CD8-positive, alpha-beta T cell (primary cell): ENCODE measurements at regions of chr7 and their contacts with region 1.

Region 1: GRCh38 chr7:80517282-80517747 is 5.5 kb upstream of the GNAT3 start:
- DNase-seq: no peak
- ATAC-seq: no peak
- H3K4me3 ChIP-seq: no peak overlapping the region
- H3K4me3 Mint-ChIP-seq: no peak overlapping the region
- H3K27ac ChIP-seq: no peak overlapping the region
- H3K27ac Mint-ChIP-seq: no peak overlapping the region
- H3K4me1 ChIP-seq: no peaks in the 10 kb centered on the region
- H3K4me1 Mint-ChIP-seq: no peaks in the 10 kb centered on the region
- H3K27me3 ChIP-seq: no peaks in the 10 kb centered on the region
- H3K27me3 Mint-ChIP-seq: no peaks in the 10 kb centered on the region
- CTCF ChIP-seq: no peak

Region 2: DNA sequence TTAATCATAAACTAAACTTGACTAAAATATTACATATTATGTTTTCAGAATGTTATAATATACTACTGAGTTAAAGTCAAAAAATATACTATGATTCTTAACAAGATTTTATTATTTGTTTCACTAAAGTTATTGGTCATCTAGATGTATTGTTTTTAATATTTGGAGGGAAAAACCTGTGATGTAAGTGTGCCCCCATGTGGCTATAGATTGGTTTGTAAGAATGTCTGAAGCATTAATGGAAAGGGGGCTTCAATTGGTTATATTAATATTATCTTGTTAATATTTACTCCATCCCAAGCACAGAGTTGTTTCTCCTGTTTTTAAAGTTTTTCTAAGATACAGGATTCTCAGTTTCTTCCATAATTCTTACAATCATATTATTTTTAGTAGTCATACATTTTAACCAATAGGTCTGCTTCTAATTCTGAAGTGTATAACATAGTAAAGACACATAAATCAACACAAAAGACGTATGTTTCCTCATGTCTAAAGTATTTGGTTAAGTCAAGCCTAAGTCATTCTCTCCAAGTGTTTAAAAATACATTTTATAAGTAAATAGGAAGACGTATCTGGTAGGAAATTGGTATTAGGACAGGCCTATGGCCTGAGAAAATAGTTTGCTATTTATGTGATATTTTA is 63.5 kb before region 1 on chr7:
- CTCF ChIA-PET with region 1: no interaction called
- POLR2A ChIA-PET with region 1: no interaction called
- intact Hi-C with region 1: loop called in 1 of 2 experiments (anchors 10 kb)
- DNase-seq: peak in 1 of 9 experiments; percentile 21
- ATAC-seq: no peak
- H3K4me3 ChIP-seq: no peak overlapping the region
- H3K4me3 Mint-ChIP-seq: no peak overlapping the region
- H3K27ac ChIP-seq: no peak overlapping the region
- H3K27ac Mint-ChIP-seq: no peak overlapping the region
- H3K4me1 ChIP-seq: no peaks in the 10 kb centered on the region
- H3K4me1 Mint-ChIP-seq: no peaks in the 10 kb centered on the region
- H3K27me3 ChIP-seq: no peaks in the 10 kb centered on the region
- H3K27me3 Mint-ChIP-seq: no peaks in the 10 kb centered on the region
- CTCF ChIP-seq: no peak

Region 3: DNA sequence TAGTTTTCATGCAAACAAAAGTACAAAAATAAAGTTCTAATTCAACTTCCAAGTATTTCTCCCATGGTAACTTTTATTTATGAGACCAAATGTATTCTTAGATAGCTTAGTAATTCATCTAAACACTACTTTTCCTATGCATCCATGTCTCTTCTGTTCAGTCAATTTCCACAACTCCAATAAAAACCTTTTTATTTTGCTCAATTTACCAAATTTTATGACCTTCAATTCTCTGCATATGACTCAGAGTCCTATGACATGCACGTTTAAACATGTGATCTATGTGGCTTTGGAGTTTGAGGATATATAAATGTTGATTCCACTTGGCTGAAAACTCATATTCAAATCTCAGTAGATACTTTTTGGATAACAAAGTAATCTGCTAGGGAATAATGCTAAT is 35.0 kb after region 1 on chr7:
- CTCF ChIA-PET with region 1: no interaction called
- POLR2A ChIA-PET with region 1: no interaction called
- intact Hi-C with region 1: loop called in 1 of 2 experiments (anchors 5 kb)
- DNase-seq: no peak
- ATAC-seq: no peak
- H3K4me3 ChIP-seq: no peak overlapping the region
- H3K4me3 Mint-ChIP-seq: no peak overlapping the region
- H3K27ac ChIP-seq: no peak overlapping the region
- H3K27ac Mint-ChIP-seq: no peak overlapping the region
- H3K4me1 ChIP-seq: no peaks in the 10 kb centered on the region
- H3K4me1 Mint-ChIP-seq: no peaks in the 10 kb centered on the region
- H3K27me3 ChIP-seq: no peaks in the 10 kb centered on the region
- H3K27me3 Mint-ChIP-seq: no peaks in the 10 kb centered on the region
- CTCF ChIP-seq: no peak